ENCODE measurements at regions of chr7 and their contacts with region 1.

Region 1: DNA sequence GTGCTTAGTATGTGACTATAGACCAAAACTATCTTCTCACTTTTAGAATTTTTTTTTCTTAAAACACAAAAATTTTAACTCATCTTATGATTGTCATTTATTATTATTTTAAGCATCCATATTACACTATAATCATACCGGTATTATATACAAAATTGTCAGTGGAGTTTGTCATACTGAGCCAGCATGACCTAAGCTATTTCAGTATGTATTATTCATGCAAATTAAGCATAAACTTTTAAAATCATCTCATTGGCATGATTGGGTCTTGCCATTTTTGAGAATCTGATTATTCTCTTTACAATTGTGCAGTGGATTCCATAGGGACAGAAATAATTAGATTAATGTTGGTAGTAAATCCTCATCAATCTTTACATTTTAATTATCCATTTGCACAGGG is 46.2 kb upstream of the STMP1 start:
- DNase-seq: no peak
- ATAC-seq: no peak
- H3K4me3 Mint-ChIP-seq: no peak overlapping the region
- H3K27ac Mint-ChIP-seq: no peak overlapping the region
- H3K4me1 Mint-ChIP-seq: no peaks in the 10 kb centered on the region
- H3K27me3 Mint-ChIP-seq: no peaks in the 10 kb centered on the region

Region 2: DNA sequence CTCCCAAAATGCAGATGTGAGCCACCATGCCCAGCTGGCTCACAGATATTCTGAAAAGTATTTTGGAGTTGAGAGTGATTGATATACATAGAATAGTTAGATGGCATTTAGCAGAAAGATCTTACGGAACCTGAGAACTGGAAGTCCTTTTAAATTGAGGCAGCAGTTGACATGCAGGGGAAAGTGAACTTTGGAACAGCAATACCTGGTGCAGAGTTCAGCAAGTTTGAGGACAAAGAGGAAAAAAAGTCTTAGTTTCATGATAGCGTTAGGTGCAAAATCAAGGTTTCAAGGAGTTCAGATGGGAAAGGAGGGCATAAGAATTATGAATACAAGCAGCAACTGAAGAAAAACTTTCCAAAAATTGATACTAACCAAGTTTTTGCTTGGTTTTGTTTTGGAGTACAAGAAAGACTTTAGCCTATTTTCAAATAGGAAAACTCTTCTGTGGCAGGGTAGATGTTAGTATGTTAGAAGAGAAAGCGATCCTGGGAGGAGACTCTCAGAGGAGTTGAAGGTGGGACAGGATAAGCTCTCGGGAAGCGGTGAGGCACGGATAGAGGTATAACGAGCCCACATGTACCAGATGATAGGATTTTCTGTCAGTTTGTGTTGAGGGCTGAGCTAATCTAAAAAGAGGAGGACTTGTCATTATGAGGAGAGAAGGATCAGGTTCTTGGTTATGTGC is 18.2 kb after region 1 on chr7:
- CTCF ChIA-PET with region 1: interaction called, 3 read pairs
- POLR2A ChIA-PET with region 1: no interaction called
- intact Hi-C with region 1: loop called in 1 of 2 experiments (anchors 2 kb)
- DNase-seq: no peak
- ATAC-seq: no peak
- H3K4me3 Mint-ChIP-seq: no peak overlapping the region
- H3K27ac Mint-ChIP-seq: no peak overlapping the region
- H3K4me1 Mint-ChIP-seq: no peaks in the 10 kb centered on the region
- H3K27me3 Mint-ChIP-seq: no peaks in the 10 kb centered on the region

Region 3: GRCh38 chr7:135843214-135843613 is 227.1 kb after region 1 on chr7:
- CTCF ChIA-PET with region 1: no interaction called
- POLR2A ChIA-PET with region 1: no interaction called
- intact Hi-C with region 1: no loop called
- DNase-seq: no peak
- ATAC-seq: peak; percentile 85
- H3K4me3 Mint-ChIP-seq: no peak overlapping the region
- H3K27ac Mint-ChIP-seq: no peak overlapping the region
- H3K4me1 Mint-ChIP-seq: peaks cover 10% of the 10 kb centered on the region
- H3K27me3 Mint-ChIP-seq: no peaks in the 10 kb centered on the region